A549 (cell line): ENCODE measurements at regions of chr20 and their contacts with region 1.

Region 1: DNA sequence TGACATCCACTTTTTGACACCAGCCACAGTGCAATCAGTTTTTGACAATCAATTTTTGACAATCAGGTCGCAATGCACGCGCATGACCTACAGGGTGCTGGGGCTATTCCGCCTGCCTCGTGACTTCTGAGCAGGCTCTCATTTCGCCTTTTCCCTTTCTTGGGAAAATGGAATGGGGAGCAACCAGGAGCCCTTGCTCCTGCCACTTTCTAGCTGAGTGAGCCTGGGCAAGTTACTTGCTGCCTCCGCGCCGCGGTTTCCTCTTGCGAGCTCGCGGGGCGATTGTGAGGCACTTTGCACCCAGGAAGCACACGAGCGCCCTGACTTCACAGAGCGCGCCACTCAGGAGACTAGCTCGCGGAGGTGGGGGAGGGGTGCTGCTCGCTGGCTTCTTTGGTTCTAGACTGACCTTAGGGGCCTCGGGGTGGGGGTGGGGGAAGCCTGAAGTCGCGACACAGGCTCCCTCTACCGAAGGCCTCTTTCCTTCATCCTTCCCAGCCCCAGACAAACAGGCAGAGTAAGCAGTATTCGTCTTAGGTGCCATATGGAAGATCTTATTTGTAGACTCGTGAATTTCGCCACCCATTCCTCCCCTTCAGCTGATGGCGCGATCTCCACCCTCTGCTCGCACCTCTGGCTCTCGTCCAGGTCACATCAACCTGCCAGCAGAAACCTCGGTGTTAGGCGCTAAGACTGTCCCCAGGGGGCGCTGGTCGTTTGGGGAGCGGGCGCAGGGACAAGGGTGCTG is 4.6 kb downstream of the TP53TG5 start:
- DNase-seq: peak; percentile 84 to 91
- ATAC-seq: peak; percentile 86 to 93
- H3K4me3 ChIP-seq: peak overlapping the region; percentile 43
- H3K27ac ChIP-seq: peak overlapping the region; percentile 40 to 73; a peak in 5 of 6 replicates
- H3K4me1 ChIP-seq: no peaks in the 10 kb centered on the region
- CTCF ChIP-seq: peak; percentile 94
- EP300 ChIP-seq: no peak
- POLR2A ChIP-seq: no peak
- RAD21 ChIP-seq: peak; percentile 87 to 89

Region 2: DNA sequence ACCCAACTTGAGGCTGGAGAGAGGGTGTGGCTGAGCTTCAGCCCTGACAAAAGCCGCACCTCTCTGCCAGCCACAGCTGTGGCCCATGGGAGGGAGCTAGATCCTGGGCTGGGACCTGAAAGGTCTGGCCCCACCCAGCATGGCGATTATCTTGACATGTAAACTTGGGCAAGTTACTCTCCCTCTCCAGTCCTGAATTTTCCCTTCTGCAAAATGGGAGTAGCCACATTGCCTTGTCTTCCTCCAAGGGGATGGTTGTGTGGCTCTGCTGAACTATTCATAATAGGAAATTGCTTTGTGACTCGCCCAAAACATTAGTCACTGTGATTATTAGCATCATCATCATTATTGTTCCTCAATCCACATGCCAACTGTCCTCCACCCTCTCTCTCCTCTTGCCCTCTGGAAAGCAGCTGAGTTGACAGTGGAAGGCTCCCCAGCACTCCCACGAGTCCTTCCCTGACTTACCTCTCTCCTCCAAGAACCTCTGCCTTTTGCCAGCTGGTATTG is 89.9 kb before region 1 on chr20:
- CTCF ChIA-PET with region 1: no interaction called
- POLR2A ChIA-PET with region 1: no interaction called
- DNase-seq: no peak
- ATAC-seq: 0 out of 6 replicates have a peak, but pooled peaks of 1 of the 2 experiments have one; percentile 22
- H3K4me3 ChIP-seq: no peak overlapping the region
- H3K27ac ChIP-seq: no peak overlapping the region
- H3K4me1 ChIP-seq: no peaks in the 10 kb centered on the region
- CTCF ChIP-seq: no peak
- EP300 ChIP-seq: no peak
- POLR2A ChIP-seq: no peak
- RAD21 ChIP-seq: no peak

Region 3: DNA sequence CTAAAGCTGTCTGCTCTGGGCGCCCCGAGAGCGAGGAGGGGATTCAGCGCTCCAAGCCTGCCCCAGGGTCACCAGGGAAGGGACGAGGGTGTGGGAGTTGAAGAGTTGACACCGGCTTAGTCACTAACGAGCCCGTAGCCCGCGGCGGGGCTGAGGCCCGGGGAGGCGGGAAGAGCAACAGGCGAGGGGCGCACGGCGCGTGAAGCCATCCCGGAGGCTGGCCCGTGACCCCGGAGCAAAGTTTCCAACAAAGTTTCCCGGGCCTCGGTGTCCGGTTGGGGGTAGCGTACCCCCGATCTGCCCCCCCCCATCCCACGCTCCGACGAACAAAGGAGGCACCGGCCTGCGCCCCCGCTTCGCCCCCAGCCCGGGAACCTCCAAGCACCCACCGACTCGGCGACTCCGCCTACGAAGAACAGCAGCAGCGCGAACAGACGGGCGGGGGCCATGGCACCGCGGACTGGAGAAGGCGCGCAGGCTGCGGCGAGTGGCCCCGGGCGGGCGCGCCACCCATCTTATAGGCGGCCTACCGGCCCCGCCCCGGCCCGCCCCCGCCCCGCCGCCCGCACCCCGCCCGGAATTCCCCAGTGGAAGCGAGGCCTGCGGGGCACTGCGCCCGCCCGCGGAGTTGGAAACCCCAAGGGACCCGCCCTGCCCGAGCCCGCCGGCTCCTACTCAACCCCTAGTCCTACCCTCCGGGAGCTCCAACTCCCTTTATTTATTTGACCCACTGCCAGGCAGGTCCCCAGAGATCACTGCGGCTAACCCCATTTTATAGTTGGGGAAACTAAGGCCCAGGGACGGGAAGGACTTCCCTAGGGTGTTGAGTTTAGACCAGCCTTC is 25.4 kb before region 1 on chr20 and contains the start of gene SDC4:
- CTCF ChIA-PET with region 1: interaction called, 15 read pairs
- POLR2A ChIA-PET with region 1: interaction called, 3 read pairs
- DNase-seq: peak; percentile 51 to 74
- ATAC-seq: peak; percentile 72 to 81
- H3K4me3 ChIP-seq: peak within 1 kb of the TSS; percentile 86
- H3K27ac ChIP-seq: peak within 1 kb of the TSS; percentile 92 to 96
- H3K4me1 ChIP-seq: peaks cover 52% of the 10 kb centered on the region
- CTCF ChIP-seq: no peak
- EP300 ChIP-seq: no peak
- POLR2A ChIP-seq: peak; percentile 99
- RAD21 ChIP-seq: no peak
- polyA plus RNA-seq, gene SDC4: 27.4 and 29.0 TPM in 2 replicates

Region 4: DNA sequence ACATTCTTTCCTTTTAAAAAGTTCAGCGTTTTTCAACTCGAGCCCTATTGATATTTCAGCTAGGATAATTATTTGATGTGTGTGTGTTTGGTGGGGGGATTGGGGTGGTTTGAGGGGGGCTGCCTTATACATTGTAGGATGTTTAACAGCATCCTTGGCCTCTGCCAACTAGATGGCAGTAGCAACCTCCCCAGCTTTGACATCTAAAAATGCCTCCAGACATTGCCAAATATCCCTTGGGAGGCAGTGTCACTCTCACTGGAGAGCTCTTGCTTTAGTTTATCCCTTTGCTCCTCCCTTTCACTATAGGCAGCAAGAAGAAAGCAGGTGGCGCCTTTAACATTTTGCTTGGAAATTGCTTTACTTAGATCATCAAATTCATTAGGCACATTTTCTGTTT is 19.2 kb after region 1 on chr20:
- CTCF ChIA-PET with region 1: interaction called, 25 read pairs
- POLR2A ChIA-PET with region 1: no interaction called
- DNase-seq: no peak
- ATAC-seq: no peak; a peak in 1 of 6 replicates
- H3K4me3 ChIP-seq: no peak overlapping the region
- H3K27ac ChIP-seq: no peak overlapping the region
- H3K4me1 ChIP-seq: no peaks in the 10 kb centered on the region
- CTCF ChIP-seq: peak; percentile 21; the same call in 1 of the 3 replicates
- EP300 ChIP-seq: no peak
- POLR2A ChIP-seq: no peak
- RAD21 ChIP-seq: 0 out of 5 replicates have a peak, but pooled peaks have one; percentile 13 to 20

Region 5: DNA sequence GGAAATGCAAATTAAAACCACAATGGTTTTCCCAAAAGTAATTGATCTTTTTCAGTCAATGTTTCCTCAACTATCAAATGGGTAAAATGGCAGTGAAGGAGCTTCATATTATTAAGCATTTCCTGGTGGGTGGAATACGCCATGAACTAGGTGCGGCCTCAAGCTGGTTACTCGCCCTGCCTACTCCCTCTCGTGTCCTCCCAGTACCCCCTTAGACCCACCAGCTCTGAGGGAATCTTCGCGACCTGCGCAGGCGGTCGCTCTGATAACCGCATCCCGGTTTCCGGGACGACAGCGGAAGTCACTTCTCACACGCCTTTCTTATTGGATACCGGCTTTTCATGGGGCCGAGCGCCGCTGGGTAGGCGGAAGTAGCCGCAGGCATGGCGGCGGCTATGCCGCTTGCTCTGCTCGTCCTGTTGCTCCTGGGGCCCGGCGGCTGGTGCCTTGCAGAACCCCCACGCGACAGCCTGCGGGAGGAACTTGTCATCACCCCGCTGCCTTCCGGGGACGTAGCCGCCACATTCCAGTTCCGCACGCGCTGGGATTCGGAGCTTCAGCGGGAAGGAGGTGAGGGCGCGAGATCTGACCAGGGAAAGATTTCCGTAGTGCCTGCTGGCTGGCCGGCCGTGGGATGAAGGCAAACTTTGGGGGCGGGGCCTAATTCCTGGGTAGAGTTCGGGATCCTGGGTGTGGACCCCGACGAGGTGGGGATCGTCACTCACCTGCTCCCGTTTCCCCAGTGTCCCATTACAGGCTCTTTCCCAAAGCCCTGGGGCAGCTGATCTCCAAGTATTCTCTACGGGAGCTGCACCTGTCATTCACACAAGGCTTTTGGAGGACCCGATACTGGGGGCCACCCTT is 42.5 kb after region 1 on chr20 and contains the start of gene PIGT:
- CTCF ChIA-PET with region 1: interaction called, 29 read pairs
- POLR2A ChIA-PET with region 1: interaction called, 3 read pairs
- DNase-seq: peak; percentile 81 to 84
- ATAC-seq: peak; percentile 84 to 93
- H3K4me3 ChIP-seq: peak within 1 kb of the TSS; percentile 92
- H3K27ac ChIP-seq: peak within 1 kb of the TSS; percentile 91
- H3K4me1 ChIP-seq: peaks cover 39% of the 10 kb centered on the region
- CTCF ChIP-seq: no peak
- EP300 ChIP-seq: no peak
- POLR2A ChIP-seq: peak; percentile 93
- RAD21 ChIP-seq: no peak
- polyA plus RNA-seq, gene PIGT: 60.3 and 79.6 TPM in 2 replicates

Region 6: GRCh38 chr20:45450097-45450818 is 76.7 kb after region 1 on chr20:
- CTCF ChIA-PET with region 1: interaction called, 111 read pairs
- POLR2A ChIA-PET with region 1: no interaction called
- DNase-seq: peak; percentile 28 to 56
- ATAC-seq: peak in 1 of 2 experiments; percentile 56; a peak in 3 of 6 replicates
- H3K4me3 ChIP-seq: no peak overlapping the region
- H3K27ac ChIP-seq: no peak overlapping the region
- H3K4me1 ChIP-seq: no peaks in the 10 kb centered on the region
- CTCF ChIP-seq: peak; percentile 62
- EP300 ChIP-seq: no peak
- POLR2A ChIP-seq: no peak
- RAD21 ChIP-seq: peak; percentile 37 to 51

Region 7: DNA sequence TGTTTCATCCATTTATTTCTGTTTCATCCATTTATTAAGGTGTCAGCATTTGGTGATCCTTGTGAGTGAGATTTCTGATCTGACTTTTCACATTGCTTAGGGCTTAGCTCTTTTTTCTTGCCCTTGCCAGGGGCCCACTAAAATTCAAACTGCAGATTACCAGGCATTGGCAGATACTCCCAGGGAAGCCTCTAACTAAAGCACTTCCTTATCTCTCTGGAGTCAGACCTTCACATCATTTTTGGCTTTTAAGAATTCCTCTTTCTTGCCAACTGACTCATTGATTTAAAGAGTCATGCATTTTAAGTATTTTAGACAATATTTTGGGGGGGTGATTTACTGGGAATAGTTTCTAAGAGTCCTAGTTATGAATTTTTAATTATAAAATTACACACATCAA is 208.2 kb after region 1 on chr20:
- CTCF ChIA-PET with region 1: no interaction called
- POLR2A ChIA-PET with region 1: no interaction called
- DNase-seq: no peak
- ATAC-seq: no peak
- H3K4me3 ChIP-seq: no peak overlapping the region
- H3K27ac ChIP-seq: no peak overlapping the region
- H3K4me1 ChIP-seq: no peaks in the 10 kb centered on the region
- CTCF ChIP-seq: no peak
- EP300 ChIP-seq: no peak
- POLR2A ChIP-seq: no peak
- RAD21 ChIP-seq: no peak

Region 8: GRCh38 chr20:45969347-45970242 is 596.1 kb after region 1 on chr20:
- CTCF ChIA-PET with region 1: no interaction called
- POLR2A ChIA-PET with region 1: no interaction called
- DNase-seq: peak; percentile 76
- ATAC-seq: peak; percentile 26 to 39; a peak in 3 of 6 replicates
- H3K4me3 ChIP-seq: 0 out of 3 replicates have a peak overlapping the region, but pooled peaks have one; percentile 95
- H3K27ac ChIP-seq: peak overlapping the region in 1 of 2 experiments; percentile 98; a peak in 3 of 6 replicates
- H3K4me1 ChIP-seq: peaks cover 18% of the 10 kb centered on the region
- CTCF ChIP-seq: peak; percentile 70
- EP300 ChIP-seq: no peak
- POLR2A ChIP-seq: no peak
- RAD21 ChIP-seq: peak; percentile 24 to 51; a peak in 3 of 5 replicates